B cell (primary cell): ENCODE measurements at regions of chr4 and their contacts with region 1.

Region 1: DNA sequence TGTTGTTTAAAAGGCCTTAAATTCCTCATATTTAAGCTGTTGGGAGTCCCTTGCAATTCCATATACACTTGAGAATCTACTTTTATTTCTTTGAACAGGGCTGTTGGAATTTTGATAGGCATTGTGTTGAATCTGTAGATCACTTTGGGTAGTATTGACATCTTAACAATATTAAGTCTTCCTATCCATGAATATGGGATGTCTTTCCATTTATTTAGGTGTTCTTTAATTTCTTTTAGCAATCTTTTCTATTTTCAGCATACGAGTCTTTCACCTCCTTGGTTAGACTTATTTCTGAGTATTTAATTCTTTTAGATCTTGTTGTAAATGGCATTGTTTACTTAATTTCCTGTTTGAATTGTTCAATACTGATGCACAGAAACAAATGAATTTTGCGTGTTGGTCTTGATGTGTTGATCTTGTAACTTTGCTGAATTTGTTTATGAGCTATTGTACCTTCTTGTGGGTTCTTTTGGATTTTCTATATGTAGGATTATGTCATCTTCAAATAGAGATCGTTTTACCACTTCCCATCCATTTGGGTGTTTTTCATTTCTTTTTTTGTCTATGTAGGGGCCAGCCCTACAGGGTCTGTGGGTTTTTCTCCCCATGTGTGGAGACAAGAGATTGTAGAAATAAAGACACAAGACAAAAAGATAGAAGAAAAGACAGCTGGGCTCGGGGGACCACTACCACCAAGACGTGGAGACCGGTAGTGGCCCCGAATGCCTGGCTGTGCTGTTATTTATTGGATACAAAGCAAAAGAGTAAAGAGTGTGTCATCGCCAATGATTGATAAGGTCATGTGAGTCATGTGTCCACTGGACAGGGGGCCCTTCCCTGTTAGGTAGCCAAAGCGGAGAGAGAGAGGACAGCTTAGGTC is 18.2 kb upstream of the CTBP1 start:
- DNase-seq: no peak
- ATAC-seq: peak; percentile 53
- H3K4me3 ChIP-seq: peak overlapping the region in 4 of 5 experiments; percentile 28 to 52 (median 42)
- H3K4me3 Mint-ChIP-seq: peak overlapping the region; percentile 92
- H3K27ac ChIP-seq: peak overlapping the region; percentile 76 to 82
- H3K27ac Mint-ChIP-seq: peak overlapping the region; percentile 95
- H3K4me1 ChIP-seq: peaks cover 16 to 17% of the 10 kb centered on the region in 2 donors
- H3K4me1 Mint-ChIP-seq: peaks cover 32% of the 10 kb centered on the region
- H3K27me3 ChIP-seq: no peaks in the 10 kb centered on the region
- H3K27me3 Mint-ChIP-seq: no peaks in the 10 kb centered on the region
- CTCF ChIP-seq: no peak

Region 2: GRCh38 chr4:519203-519651 is 747.9 kb before region 1 on chr4:
- CTCF ChIA-PET with region 1: no interaction called
- POLR2A ChIA-PET with region 1: no interaction called
- intact Hi-C with region 1: no loop called
- DNase-seq: no peak
- ATAC-seq: no peak
- H3K4me3 ChIP-seq: no peak overlapping the region
- H3K4me3 Mint-ChIP-seq: no peak overlapping the region
- H3K27ac ChIP-seq: no peak overlapping the region
- H3K27ac Mint-ChIP-seq: no peak overlapping the region
- H3K4me1 ChIP-seq: no peaks in the 10 kb centered on the region
- H3K4me1 Mint-ChIP-seq: no peaks in the 10 kb centered on the region
- H3K27me3 ChIP-seq: no peaks in the 10 kb centered on the region
- H3K27me3 Mint-ChIP-seq: no peaks in the 10 kb centered on the region
- CTCF ChIP-seq: no peak

Region 3: GRCh38 chr4:1130316-1131186 is 136.6 kb before region 1 on chr4:
- CTCF ChIA-PET with region 1: interaction called, 88 read pairs
- POLR2A ChIA-PET with region 1: no interaction called
- intact Hi-C with region 1: loop called (anchors 1 kb)
- DNase-seq: peak; percentile 89
- ATAC-seq: peak; percentile 99
- H3K4me3 ChIP-seq: no peak overlapping the region
- H3K4me3 Mint-ChIP-seq: no peak overlapping the region
- H3K27ac ChIP-seq: no peak overlapping the region
- H3K27ac Mint-ChIP-seq: no peak overlapping the region
- H3K4me1 ChIP-seq: peaks cover 18% of the 10 kb centered on the region in 2 donors
- H3K4me1 Mint-ChIP-seq: peaks cover 22% of the 10 kb centered on the region
- H3K27me3 ChIP-seq: no peaks in the 10 kb centered on the region
- H3K27me3 Mint-ChIP-seq: peaks cover 12% of the 10 kb centered on the region
- CTCF ChIP-seq: peak; percentile 100

Region 4: DNA sequence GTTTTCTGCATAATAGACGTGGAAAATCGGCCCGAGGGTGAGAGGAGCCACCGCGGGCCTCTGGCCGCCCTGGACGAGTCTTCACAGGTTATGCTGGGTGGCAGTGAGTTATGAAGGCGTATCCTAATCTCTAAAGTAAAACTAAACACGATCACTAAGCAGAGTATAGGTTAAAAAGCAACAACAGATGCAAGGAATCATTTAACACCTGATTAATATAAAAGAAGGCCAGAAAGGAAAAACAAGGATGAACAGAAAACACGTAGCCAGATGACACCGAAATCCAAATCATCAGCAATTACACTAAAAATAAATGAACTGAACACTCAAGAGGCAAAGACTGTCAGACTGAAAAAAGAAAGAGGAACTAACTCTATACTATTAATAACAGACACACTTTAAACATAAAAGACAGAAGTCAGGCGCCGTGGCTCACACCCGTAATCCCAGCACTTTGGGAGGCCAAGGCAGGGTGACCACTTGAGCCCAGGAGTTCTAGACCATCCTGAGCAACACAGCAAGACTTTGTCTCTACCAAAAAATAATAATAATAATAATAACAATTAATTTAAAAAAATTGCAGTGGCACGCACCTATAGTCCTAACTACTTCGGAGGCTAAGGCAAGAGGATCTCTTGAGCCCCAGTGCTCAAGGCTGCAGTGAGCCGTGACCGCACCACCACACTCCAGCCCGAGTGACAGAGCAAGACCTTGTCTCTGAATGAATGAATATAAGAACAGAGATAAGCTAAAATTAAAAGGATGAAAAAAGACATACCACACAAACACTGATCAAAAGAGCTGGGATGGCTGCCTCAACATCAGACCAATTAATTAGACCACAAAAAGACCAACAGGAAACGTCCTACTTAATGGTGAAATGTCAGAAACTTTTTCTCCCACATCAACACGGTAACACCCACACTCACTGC is 48.2 kb before region 1 on chr4:
- CTCF ChIA-PET with region 1: interaction called, 7 read pairs
- POLR2A ChIA-PET with region 1: no interaction called
- intact Hi-C with region 1: loop called (anchors 1 kb)
- DNase-seq: peak; percentile 68
- ATAC-seq: peak; percentile 83
- H3K4me3 ChIP-seq: peak overlapping the region in 4 of 5 experiments; percentile 23 to 60 (median 34)
- H3K4me3 Mint-ChIP-seq: peak overlapping the region; percentile 84
- H3K27ac ChIP-seq: peak overlapping the region; percentile 56 to 60
- H3K27ac Mint-ChIP-seq: peak overlapping the region; percentile 92
- H3K4me1 ChIP-seq: peaks cover 44 to 69% of the 10 kb centered on the region in 2 donors
- H3K4me1 Mint-ChIP-seq: peaks cover 62% of the 10 kb centered on the region
- H3K27me3 ChIP-seq: no peaks in the 10 kb centered on the region
- H3K27me3 Mint-ChIP-seq: no peaks in the 10 kb centered on the region
- CTCF ChIP-seq: no peak

Region 5: DNA sequence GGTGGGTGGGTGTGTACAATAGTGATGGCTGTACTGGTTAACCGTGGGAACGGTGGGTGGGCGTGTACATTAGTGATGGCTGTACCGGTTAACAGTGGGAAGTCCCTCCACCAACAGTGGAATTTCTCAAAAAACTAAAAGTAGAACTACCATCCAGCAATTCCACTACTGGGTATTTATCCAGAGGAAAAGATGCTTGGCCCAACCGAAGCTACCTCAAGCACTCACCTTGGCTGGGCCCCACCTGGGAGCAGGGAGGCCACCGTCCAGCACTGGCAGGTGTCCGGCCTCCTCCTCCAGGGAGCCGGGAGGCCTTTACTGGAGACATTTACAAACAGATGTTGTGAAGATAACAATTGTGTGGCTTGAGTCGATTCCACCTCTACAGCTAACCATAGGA is 16.6 kb after region 1 on chr4:
- CTCF ChIA-PET with region 1: interaction called, 10 read pairs
- POLR2A ChIA-PET with region 1: no interaction called
- intact Hi-C with region 1: no loop called
- DNase-seq: no peak
- ATAC-seq: no peak
- H3K4me3 ChIP-seq: no peak overlapping the region
- H3K4me3 Mint-ChIP-seq: no peak overlapping the region
- H3K27ac ChIP-seq: no peak overlapping the region
- H3K27ac Mint-ChIP-seq: no peak overlapping the region
- H3K4me1 ChIP-seq: peaks cover 2% of the 10 kb centered on the region in 2 donors
- H3K4me1 Mint-ChIP-seq: peaks cover 2% of the 10 kb centered on the region
- H3K27me3 ChIP-seq: no peaks in the 10 kb centered on the region
- H3K27me3 Mint-ChIP-seq: no peaks in the 10 kb centered on the region
- CTCF ChIP-seq: no peak

Region 6: GRCh38 chr4:1346781-1347409 is 79.8 kb after region 1 on chr4 and contains the start of gene UVSSA:
- CTCF ChIA-PET with region 1: interaction called, 17 read pairs
- POLR2A ChIA-PET with region 1: interaction called, 3 read pairs
- intact Hi-C with region 1: loop called (anchors 1 kb)
- DNase-seq: peak; percentile 100
- ATAC-seq: peak; percentile 90
- H3K4me3 ChIP-seq: peak within 1 kb of the TSS; percentile 23 to 86 (median 82)
- H3K4me3 Mint-ChIP-seq: peak within 1 kb of the TSS; percentile 93
- H3K27ac ChIP-seq: peak within 1 kb of the TSS; percentile 91
- H3K27ac Mint-ChIP-seq: peak within 1 kb of the TSS; percentile 96
- H3K4me1 ChIP-seq: peaks cover 15 to 26% of the 10 kb centered on the region in 2 donors
- H3K4me1 Mint-ChIP-seq: peaks cover 33% of the 10 kb centered on the region
- H3K27me3 ChIP-seq: no peaks in the 10 kb centered on the region
- H3K27me3 Mint-ChIP-seq: no peaks in the 10 kb centered on the region
- CTCF ChIP-seq: no peak
- total RNA-seq, gene UVSSA: 40.5 and 47.3 TPM in 2 replicates